ENCODE measurements at regions of chr12 and their contacts with region 1.

Region 1: GRCh38 chr12:109154451-109155438 is 38.4 kb downstream of the ACACB start:
- DNase-seq: peak; percentile 91
- ATAC-seq: peak; percentile 94

Region 2: DNA sequence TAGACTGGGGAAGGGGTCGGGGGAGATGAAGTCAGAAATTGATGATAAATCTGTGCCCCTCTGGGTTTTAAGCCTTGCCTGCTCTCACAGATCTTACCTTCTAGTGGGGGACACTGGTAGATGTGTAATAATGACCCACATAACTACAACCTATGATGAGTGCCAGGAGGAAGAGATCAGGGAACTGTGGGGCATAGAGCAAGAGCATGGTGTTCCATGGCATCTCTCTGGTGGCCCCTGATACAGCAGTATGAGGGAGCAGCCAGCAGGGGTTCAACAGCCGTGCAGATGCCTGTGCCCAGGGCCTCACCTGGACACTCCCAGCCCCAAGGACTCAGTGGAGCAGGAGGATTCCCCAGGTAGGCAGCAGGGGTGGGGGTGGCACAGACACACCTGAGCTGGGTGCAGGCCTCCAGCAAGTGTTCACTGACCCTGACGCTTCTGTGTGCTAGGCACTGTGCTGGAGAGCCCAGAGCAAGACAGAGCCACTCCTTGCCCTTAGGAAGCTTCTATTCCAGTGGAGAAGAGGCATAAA is 33.3 kb before region 1 on chr12:
- intact Hi-C with region 1: loop called (anchors 5 kb)
- DNase-seq: no peak
- ATAC-seq: no peak

Measured in Right ventricle myocardium superior (tissue), 1 donor.